ENCODE measurements at regions of chr19 and their contacts with region 1.

Region 1: GRCh38 chr19:15379083-15379995 is at the start of gene AKAP8:
- DNase-seq: peak; percentile 95 to 97
- H3K4me3 ChIP-seq: peak within 1 kb of the TSS; percentile 84 to 99 (median 94)
- H3K27ac ChIP-seq: peak within 1 kb of the TSS; percentile 97
- H3K4me1 ChIP-seq: peaks cover 0 to 9% (median 6%) of the 10 kb centered on the region in 4 experiments; a peak in 6 of 7 replicates
- H3K27me3 ChIP-seq: no peaks in the 10 kb centered on the region
- CTCF ChIP-seq: no peak
- EP300 ChIP-seq: no peak
- POLR2A ChIP-seq: peak; percentile 91 to 96
- RAD21 ChIP-seq: no peak
- total RNA-seq, gene AKAP8: 41.0 and 41.3 TPM in 2 replicates

Region 2: DNA sequence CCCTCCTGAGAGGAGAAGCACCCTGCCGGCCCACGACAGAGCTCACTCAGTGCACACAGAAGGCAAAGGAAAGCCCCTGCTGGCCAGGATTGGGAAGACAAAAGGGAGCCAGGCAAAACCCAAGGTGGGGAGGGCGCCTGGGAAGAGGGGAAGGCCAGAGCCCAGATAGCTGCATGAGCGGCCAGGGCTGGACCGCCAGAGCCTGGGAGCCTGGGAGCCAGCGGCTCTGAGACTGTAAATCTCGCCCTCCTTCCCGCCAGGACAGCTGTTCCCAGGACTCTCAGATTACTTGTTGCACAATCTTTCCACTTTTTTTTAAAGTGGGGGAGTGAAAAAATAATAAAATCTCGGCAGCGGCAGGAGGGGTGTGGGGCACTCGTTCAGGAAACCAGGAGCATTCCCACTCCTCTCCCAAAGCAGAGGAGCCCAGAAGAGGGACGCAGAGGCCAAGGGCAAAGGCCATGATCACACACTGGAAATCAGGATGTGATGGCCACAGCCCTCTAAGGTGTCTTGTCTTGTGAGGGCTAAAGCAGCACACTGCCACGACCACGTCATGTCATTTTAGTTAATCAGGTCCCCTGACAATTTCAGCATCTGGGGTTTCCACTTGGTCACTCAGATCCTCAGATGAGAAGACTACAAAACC is 127.5 kb before region 1 on chr19:
- CTCF ChIA-PET with region 1: interaction called, 5 read pairs
- POLR2A ChIA-PET with region 1: interaction called, 12 read pairs
- DNase-seq: peak; percentile 46 to 84
- H3K4me3 ChIP-seq: no peak overlapping the region; a peak in 2 of 8 replicates
- H3K27ac ChIP-seq: no peak overlapping the region
- H3K4me1 ChIP-seq: peaks cover 0 to 15% (median 4%) of the 10 kb centered on the region in 4 experiments; a peak in 5 of 7 replicates
- H3K27me3 ChIP-seq: no peaks in the 10 kb centered on the region
- CTCF ChIP-seq: peak; percentile 67 to 71 (median 71)
- EP300 ChIP-seq: no peak
- POLR2A ChIP-seq: no peak
- RAD21 ChIP-seq: peak; percentile 38 to 52

Region 3: GRCh38 chr19:15358918-15359317 is 20.4 kb before region 1 on chr19:
- CTCF ChIA-PET with region 1: interaction called, 3 read pairs
- POLR2A ChIA-PET with region 1: interaction called, 30 read pairs
- DNase-seq: no peak
- H3K4me3 ChIP-seq: no peak overlapping the region
- H3K27ac ChIP-seq: no peak overlapping the region
- H3K4me1 ChIP-seq: no peaks in the 10 kb centered on the region
- H3K27me3 ChIP-seq: no peaks in the 10 kb centered on the region
- CTCF ChIP-seq: no peak
- EP300 ChIP-seq: no peak
- POLR2A ChIP-seq: no peak
- RAD21 ChIP-seq: no peak

Region 4: GRCh38 chr19:15398501-15399233 is 19.3 kb after region 1 on chr19:
- CTCF ChIA-PET with region 1: interaction called, 3 read pairs
- POLR2A ChIA-PET with region 1: interaction called, 36 read pairs
- DNase-seq: no peak
- H3K4me3 ChIP-seq: no peak overlapping the region
- H3K27ac ChIP-seq: no peak overlapping the region
- H3K4me1 ChIP-seq: no peaks in the 10 kb centered on the region
- H3K27me3 ChIP-seq: no peaks in the 10 kb centered on the region
- CTCF ChIP-seq: no peak
- EP300 ChIP-seq: no peak
- POLR2A ChIP-seq: no peak
- RAD21 ChIP-seq: no peak

Region 5: DNA sequence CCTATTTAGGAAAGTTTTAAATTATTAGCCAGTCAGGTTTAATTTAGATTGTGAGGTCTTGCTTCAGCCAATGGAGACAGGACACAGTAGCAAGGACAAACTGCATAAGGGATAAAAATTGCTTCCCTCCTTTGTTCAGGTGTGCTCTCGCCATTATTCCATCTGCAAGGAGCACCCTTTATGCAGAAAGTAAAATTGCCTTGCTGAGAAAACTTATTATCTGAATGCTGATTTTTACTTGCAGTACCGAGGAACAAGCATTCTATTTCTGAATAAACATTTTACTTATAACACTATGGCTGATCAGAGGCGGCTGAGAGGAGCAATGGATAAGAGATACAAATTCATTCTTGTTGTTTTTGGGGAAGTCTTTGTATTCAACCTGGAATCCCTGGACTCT is 137.0 kb after region 1 on chr19:
- CTCF ChIA-PET with region 1: no interaction called
- POLR2A ChIA-PET with region 1: no interaction called
- DNase-seq: no peak
- H3K4me3 ChIP-seq: no peak overlapping the region
- H3K27ac ChIP-seq: no peak overlapping the region
- H3K4me1 ChIP-seq: no peaks in the 10 kb centered on the region
- H3K27me3 ChIP-seq: no peaks in the 10 kb centered on the region
- CTCF ChIP-seq: no peak
- EP300 ChIP-seq: no peak
- POLR2A ChIP-seq: no peak
- RAD21 ChIP-seq: no peak

Region 6: GRCh38 chr19:15563325-15563794 is 184.0 kb after region 1 on chr19:
- CTCF ChIA-PET with region 1: no interaction called
- POLR2A ChIA-PET with region 1: no interaction called
- DNase-seq: no peak
- H3K4me3 ChIP-seq: no peak overlapping the region
- H3K27ac ChIP-seq: no peak overlapping the region
- H3K4me1 ChIP-seq: no peaks in the 10 kb centered on the region
- H3K27me3 ChIP-seq: no peaks in the 10 kb centered on the region
- CTCF ChIP-seq: no peak
- EP300 ChIP-seq: no peak
- POLR2A ChIP-seq: no peak
- RAD21 ChIP-seq: no peak